ENCODE measurements at regions of chr22 and their contacts with region 1.

Region 1: GRCh38 chr22:25582946-25583345 is 18.5 kb downstream of the GRK3 start:
- DNase-seq: no peak
- H3K4me3 ChIP-seq: no peak overlapping the region
- H3K27ac ChIP-seq: no peak overlapping the region
- H3K4me1 ChIP-seq: no peaks in the 10 kb centered on the region
- H3K27me3 ChIP-seq: no peaks in the 10 kb centered on the region
- CTCF ChIP-seq: no peak
- EP300 ChIP-seq: no peak
- POLR2A ChIP-seq: no peak

Region 2: DNA sequence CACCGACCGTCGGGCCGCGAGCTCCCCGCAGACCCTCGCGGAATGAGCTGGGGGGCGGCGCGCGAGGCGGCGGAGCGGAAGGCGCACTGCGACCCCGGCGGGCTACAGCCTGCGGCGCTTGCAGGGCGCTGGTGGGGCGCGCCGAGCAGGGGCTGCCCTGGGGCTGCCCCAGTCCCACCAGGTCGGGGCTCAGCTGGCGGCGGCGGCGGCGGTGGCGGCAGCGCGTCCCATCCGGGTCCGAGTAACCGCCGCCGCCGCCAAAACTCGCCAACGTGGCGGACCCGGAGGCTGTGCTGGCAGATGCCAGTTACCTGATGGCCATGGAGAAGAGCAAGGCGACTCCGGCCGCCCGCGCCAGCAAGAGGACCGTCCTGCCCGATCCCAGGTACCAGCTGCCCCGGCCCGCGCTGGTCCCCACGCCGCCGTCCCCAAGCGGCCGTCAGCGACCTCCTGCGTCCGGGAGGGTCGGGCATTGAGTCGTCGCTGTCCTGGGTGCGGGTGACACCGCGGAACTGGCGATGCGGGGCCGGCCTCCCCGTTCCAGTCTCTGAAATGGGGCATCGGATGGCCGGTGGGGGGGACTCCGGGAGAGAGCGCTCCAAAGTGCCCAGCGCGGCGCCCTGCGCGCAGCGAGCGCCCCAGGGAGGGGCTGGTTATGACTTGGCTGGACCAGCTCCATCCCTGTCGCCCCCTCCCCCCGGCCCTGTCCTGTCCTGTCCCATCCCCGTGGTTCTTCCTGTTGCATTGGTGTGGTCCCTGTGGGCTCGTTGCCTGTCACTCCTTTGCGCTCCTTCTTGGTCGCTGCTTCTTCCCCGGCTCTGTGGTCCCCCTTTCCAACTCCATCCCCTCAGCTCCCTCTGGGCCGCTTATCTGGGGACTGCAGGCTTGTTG is 300.0 kb before region 1 on chr22:
- in situ Hi-C with region 1: loop called in 3 of 4 experiments (anchors 10 to 25 kb)
- intact Hi-C with region 1: no loop called
- DNase-seq: no peak
- H3K4me3 ChIP-seq: peak overlapping the region in 1 of 4 donors; percentile 18
- H3K27ac ChIP-seq: no peak overlapping the region
- H3K4me1 ChIP-seq: peaks cover 0 to 5% (median 0%) of the 10 kb centered on the region in 4 donors
- H3K27me3 ChIP-seq: peaks cover 69% of the 10 kb centered on the region
- CTCF ChIP-seq: no peak
- EP300 ChIP-seq: no peak
- POLR2A ChIP-seq: no peak